Esophagus muscularis mucosa (tissue), 4 donors: ENCODE measurements at regions of chr16 and their contacts with region 1.

Region 1: GRCh38 chr16:28067604-28068379 is 4.3 kb upstream of the GSG1L start:
- DNase-seq: no peak
- H3K4me3 ChIP-seq: no peak overlapping the region
- H3K27ac ChIP-seq: no peak overlapping the region
- H3K4me1 ChIP-seq: peaks cover 0 to 26% (median 19%) of the 10 kb centered on the region in 4 donors
- H3K27me3 ChIP-seq: peaks cover 0 to 23% (median 4%) of the 10 kb centered on the region in 4 donors
- CTCF ChIP-seq: no peak
- EP300 ChIP-seq: no peak
- POLR2A ChIP-seq: no peak

Region 2: GRCh38 chr16:27400751-27401620 is 666.8 kb before region 1 on chr16:
- intact Hi-C with region 1: no loop called
- DNase-seq: no peak
- H3K4me3 ChIP-seq: no peak overlapping the region
- H3K27ac ChIP-seq: no peak overlapping the region
- H3K4me1 ChIP-seq: peaks cover 6 to 22% (median 14%) of the 10 kb centered on the region in 4 donors
- H3K27me3 ChIP-seq: peaks cover 0 to 37% (median 0%) of the 10 kb centered on the region in 4 donors
- CTCF ChIP-seq: no peak
- EP300 ChIP-seq: no peak
- POLR2A ChIP-seq: no peak

Region 3: GRCh38 chr16:27639561-27640276 is 428.1 kb before region 1 on chr16:
- intact Hi-C with region 1: loop called (anchors 10 kb)
- DNase-seq: no peak
- H3K4me3 ChIP-seq: no peak overlapping the region
- H3K27ac ChIP-seq: no peak overlapping the region
- H3K4me1 ChIP-seq: no peaks in the 10 kb centered on the region
- H3K27me3 ChIP-seq: no peaks in the 10 kb centered on the region
- CTCF ChIP-seq: peak; percentile 30 to 49 (median 31)
- EP300 ChIP-seq: no peak
- POLR2A ChIP-seq: no peak

Region 4: DNA sequence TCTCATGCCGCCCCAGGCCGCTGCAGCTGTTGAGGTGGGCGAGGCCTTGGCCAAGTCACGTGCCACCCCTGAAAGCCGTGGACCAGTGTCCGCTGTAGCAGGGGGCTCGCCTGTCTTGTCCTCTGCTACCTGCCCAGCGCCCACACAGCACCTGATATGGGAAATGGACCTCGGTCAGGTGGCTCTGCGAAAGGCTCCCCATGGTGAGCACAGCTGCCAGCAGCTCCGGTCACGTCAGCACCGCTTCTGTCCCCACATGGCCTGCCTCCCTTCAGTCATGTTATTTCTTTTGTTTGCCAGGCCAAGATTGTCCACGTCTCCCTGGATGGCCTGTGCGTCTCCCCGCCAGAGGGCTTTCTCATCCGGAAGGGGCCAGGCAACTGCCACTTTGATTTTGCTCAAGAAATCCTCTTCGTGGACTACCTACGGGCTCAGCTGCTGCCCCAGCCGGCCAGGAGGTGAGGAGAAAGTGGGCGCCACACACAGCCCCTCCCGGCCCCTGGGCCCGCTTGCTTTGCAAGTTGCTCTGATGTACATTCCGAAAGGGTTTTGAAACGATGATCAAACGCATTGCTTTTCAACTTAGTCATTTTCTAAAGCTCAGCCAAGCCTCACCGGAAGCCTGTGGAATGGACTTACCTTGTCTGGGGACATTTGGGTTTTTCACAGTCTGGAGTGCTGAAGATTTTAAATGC is 298.1 kb before region 1 on chr16:
- intact Hi-C with region 1: loop called (anchors 5 kb)
- DNase-seq: no peak
- H3K4me3 ChIP-seq: no peak overlapping the region
- H3K27ac ChIP-seq: no peak overlapping the region
- H3K4me1 ChIP-seq: no peaks in the 10 kb centered on the region
- H3K27me3 ChIP-seq: no peaks in the 10 kb centered on the region
- CTCF ChIP-seq: no peak
- EP300 ChIP-seq: no peak
- POLR2A ChIP-seq: no peak

Region 5: GRCh38 chr16:27779641-27780164 is 288.1 kb before region 1 on chr16:
- intact Hi-C with region 1: loop called (anchors 5 kb)
- DNase-seq: no peak
- H3K4me3 ChIP-seq: no peak overlapping the region
- H3K27ac ChIP-seq: no peak overlapping the region
- H3K4me1 ChIP-seq: peaks cover 0 to 23% (median 21%) of the 10 kb centered on the region in 4 donors
- H3K27me3 ChIP-seq: peaks cover 0 to 14% (median 0%) of the 10 kb centered on the region in 4 donors
- CTCF ChIP-seq: peak in 2 of 3 experiments; percentile 30 to 49
- EP300 ChIP-seq: no peak
- POLR2A ChIP-seq: no peak

Region 6: GRCh38 chr16:27973678-27974077 is 94.1 kb before region 1 on chr16:
- intact Hi-C with region 1: loop called (anchors 2 kb)
- DNase-seq: no peak
- H3K4me3 ChIP-seq: no peak overlapping the region
- H3K27ac ChIP-seq: no peak overlapping the region
- H3K4me1 ChIP-seq: peaks cover 0 to 12% (median 9%) of the 10 kb centered on the region in 4 donors
- H3K27me3 ChIP-seq: peaks cover 0 to 10% (median 0%) of the 10 kb centered on the region in 4 donors
- CTCF ChIP-seq: no peak
- EP300 ChIP-seq: no peak
- POLR2A ChIP-seq: no peak